Body of pancreas (tissue), 4 donors: ENCODE measurements at regions of chr3 and their contacts with region 1.

Region 1: DNA sequence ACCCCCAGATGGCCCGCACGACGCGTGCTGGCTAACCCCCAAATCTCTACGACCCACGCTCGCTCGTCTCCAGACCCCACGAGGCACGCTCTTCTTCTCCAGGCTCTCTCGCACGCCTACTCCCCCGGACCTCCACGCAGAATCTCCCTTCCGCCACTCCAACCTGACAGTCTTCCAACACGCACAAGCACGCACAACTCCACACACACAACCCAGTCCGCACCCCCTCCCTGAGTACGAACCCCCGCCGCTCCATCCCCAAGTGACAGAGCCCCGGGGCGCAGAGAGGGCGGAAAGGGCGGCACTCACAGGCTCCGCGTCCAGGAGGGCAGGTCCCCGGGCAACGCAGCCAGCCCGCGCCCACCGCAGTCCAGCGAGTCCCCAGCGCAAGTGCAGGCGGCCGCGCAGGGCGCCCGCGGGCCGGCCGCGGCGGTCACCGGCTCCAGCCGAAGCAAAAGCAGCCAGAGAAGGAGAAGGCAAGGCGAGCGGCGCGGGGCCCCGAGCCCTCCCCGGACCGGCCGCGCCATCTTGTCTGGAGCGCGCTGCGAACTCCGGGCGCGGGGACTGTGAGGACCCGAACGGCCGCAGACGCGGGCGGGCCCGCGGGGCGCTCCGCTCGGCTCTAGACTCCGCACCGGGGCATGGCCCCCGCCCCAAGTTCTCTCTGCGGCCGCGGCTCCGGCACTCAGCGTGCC is 794 bp downstream of the LRIG1 start:
- DNase-seq: peak; percentile 36 to 48 (median 42)
- ATAC-seq: no peak
- H3K4me3 ChIP-seq: peak overlapping the region; percentile 81 to 90
- H3K27ac ChIP-seq: peak overlapping the region; percentile 85 to 98 (median 94)
- H3K4me1 ChIP-seq: peaks cover 77% of the 10 kb centered on the region
- H3K27me3 ChIP-seq: no peaks in the 10 kb centered on the region
- CTCF ChIP-seq: no peak
- POLR2A ChIP-seq: no peak

Region 2: DNA sequence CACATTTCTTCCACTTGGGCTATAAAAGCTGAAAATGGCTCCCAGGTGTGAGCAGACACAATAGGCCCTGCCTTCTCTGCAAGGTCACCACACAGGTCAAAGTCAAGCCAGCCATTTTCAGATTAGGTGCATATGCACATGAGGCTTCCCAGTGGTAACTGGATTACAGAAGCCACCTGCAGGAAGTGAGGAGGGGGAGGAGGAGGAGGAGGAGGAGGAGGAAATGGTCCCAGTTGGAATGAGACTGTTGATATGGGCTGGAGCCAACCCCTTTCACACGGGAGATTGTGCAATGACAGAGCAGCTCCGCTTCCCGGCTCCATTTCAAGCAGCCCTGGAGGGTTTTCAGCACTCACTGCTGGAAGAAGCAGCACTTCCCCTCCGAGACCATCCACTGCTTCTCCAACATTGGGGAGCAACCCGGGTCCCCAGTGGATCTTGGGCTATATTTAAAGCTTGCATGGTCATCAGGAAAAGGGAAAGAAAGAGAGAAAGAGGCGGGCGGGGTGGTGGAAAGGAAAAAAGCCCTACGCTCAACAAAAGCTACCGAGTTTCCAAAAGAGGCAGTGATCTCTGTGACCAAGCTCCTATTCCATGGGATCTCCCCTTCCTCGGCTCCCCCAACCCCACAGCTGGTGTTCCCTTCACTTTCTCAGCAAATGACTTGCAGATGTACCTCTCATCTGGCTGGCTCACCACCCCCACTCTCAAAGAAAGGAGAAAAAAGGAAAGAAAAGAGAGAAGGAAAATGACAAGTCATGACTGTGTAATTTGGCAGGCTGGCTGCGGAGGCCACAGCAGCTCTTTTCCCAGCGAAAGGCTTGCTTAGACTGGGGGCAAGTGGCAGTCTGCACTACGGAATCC is 57.5 kb before region 1 on chr3:
- intact Hi-C with region 1: loop called (anchors 10 kb)
- DNase-seq: peak; percentile 82 to 91 (median 90)
- ATAC-seq: peak; percentile 90
- H3K4me3 ChIP-seq: no peak overlapping the region
- H3K27ac ChIP-seq: peak overlapping the region; percentile 57 to 85 (median 82)
- H3K4me1 ChIP-seq: peaks cover 67% of the 10 kb centered on the region
- H3K27me3 ChIP-seq: no peaks in the 10 kb centered on the region
- CTCF ChIP-seq: peak in 2 of 7 experiments; percentile 7 to 10
- POLR2A ChIP-seq: peak in 2 of 3 donors; percentile 8 to 12

Region 3: GRCh38 chr3:66693461-66694031 is 193.5 kb after region 1 on chr3:
- intact Hi-C with region 1: no loop called
- DNase-seq: peak; percentile 53 to 79 (median 64)
- ATAC-seq: peak; percentile 47
- H3K4me3 ChIP-seq: no peak overlapping the region
- H3K27ac ChIP-seq: no peak overlapping the region
- H3K4me1 ChIP-seq: peaks cover 7% of the 10 kb centered on the region
- H3K27me3 ChIP-seq: no peaks in the 10 kb centered on the region
- CTCF ChIP-seq: no peak
- POLR2A ChIP-seq: no peak

Region 4: GRCh38 chr3:66816090-66816761 is 316.2 kb after region 1 on chr3:
- intact Hi-C with region 1: loop called (anchors 10 kb)
- DNase-seq: peak in 1 of 4 donors; percentile 32
- ATAC-seq: peak; percentile 76
- H3K4me3 ChIP-seq: no peak overlapping the region
- H3K27ac ChIP-seq: no peak overlapping the region
- H3K4me1 ChIP-seq: peaks cover 49% of the 10 kb centered on the region
- H3K27me3 ChIP-seq: no peaks in the 10 kb centered on the region
- CTCF ChIP-seq: peak; percentile 39 to 73 (median 66)
- POLR2A ChIP-seq: no peak

Region 5: DNA sequence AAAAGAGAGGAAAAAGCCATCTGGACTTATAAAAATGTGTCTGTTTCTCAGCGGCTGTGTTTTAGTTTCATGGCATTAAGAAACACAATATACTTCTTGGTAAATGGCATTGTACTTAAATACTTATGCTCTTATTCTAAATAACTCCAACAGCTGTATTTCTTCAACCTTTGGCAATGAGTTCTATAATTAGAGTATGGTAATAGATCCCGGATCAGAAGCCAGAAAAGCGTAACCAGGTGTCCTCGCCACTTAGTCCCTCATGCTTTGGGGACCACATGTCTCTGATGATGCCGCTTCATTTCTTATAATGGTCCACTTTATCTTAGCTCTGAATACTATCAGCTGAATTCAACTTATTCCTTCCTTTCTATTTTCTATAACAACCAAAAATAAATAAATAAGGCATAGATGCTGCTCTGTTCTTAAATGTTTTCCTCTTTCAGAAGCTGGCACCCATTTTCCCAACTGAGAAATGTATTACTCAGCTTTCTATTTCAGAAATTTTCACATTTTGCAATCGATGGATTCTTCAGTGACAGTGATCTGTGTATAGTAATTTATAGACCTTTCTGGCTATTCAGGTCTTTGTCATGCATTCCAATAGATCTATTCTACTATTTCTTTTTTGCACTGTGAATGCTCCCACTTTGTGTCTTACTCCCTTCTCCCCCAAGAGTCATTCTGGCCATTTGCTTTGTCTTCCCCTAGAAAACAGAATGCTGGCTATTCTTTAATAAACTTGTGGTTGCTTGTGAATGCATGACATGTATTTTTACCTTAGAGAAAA is 410.4 kb after region 1 on chr3:
- intact Hi-C with region 1: no loop called
- DNase-seq: no peak
- ATAC-seq: no peak
- H3K4me3 ChIP-seq: no peak overlapping the region
- H3K27ac ChIP-seq: no peak overlapping the region
- H3K4me1 ChIP-seq: no peaks in the 10 kb centered on the region
- H3K27me3 ChIP-seq: no peaks in the 10 kb centered on the region
- CTCF ChIP-seq: no peak
- POLR2A ChIP-seq: no peak